ENCODE measurements at regions of chr3 and their contacts with region 1.

Region 1: GRCh38 chr3:135240426-135240825 is 445.4 kb downstream of the EPHB1 start:
- DNase-seq: no peak
- ATAC-seq: peak in 1 of 8 donors; percentile 41
- H3K4me3 ChIP-seq: no peak overlapping the region
- H3K27ac ChIP-seq: no peak overlapping the region
- H3K4me1 ChIP-seq: no peaks in the 10 kb centered on the region
- H3K27me3 ChIP-seq: peaks cover 0 to 17% (median 0%) of the 10 kb centered on the region in 7 donors
- CTCF ChIP-seq: peak in 2 of 9 donors; percentile 9 to 18

Region 2: DNA sequence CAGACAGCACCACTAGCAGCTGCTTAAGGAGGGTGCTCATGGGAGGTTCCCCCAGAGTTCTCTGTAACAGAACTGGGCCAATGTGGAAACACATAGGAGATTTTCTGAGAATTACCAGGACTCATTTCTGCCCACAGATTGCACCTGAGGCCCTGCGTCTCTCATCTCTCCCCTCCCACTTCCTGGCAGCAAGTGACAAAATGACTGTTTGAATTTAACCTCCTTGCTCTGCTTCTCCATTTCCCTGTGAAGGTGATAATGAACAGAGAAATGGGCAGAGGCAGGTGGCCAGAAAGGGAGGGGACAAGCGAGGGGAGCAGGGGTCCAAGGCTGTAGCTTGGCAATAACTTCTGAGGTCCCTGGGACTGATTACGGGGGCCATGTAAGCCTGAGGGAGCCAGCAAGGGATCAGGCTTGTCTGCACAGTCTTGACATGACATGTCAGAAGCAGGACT is 437.3 kb before region 1 on chr3:
- intact Hi-C with region 1: loop called in 6 of 10 experiments (anchors 10 kb)
- DNase-seq: no peak
- ATAC-seq: no peak
- H3K4me3 ChIP-seq: no peak overlapping the region
- H3K27ac ChIP-seq: no peak overlapping the region
- H3K4me1 ChIP-seq: no peaks in the 10 kb centered on the region
- H3K27me3 ChIP-seq: peaks cover 0 to 20% (median 12%) of the 10 kb centered on the region in 7 donors
- CTCF ChIP-seq: no peak

Region 3: DNA sequence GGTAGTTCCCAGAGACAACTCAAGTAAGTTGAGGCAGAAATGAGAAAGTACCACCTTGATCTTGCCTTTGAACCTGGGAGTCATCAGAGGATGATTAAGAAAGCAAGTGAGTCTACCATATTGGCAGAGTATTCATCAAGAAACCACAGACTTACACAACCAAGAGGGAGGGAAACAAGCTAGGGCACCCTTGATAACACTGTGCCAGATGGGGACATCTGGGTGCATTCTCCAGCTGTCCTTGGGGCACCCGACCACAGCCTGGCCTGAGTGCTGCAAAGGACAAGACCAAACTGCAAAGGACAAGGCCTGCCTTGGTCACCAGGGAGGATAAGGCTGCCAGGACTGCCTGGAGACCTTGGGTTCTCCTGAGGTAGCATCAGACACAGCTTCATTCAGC is 108.3 kb after region 1 on chr3:
- intact Hi-C with region 1: loop called in 1 of 10 experiments (anchors 10 kb)
- DNase-seq: no peak
- ATAC-seq: no peak
- H3K4me3 ChIP-seq: no peak overlapping the region
- H3K27ac ChIP-seq: no peak overlapping the region
- H3K4me1 ChIP-seq: no peaks in the 10 kb centered on the region
- H3K27me3 ChIP-seq: peaks cover 0 to 38% (median 7%) of the 10 kb centered on the region in 7 donors
- CTCF ChIP-seq: no peak